ENCODE measurements at regions of chr13 and their contacts with region 1.

Region 1: GRCh38 chr13:40190641-40191100 is 475.8 kb downstream of the FOXO1 start:
- DNase-seq: peak in 8 of 10 donors; percentile 71 to 86 (median 81)
- H3K4me3 ChIP-seq: peak overlapping the region in 11 of 59 donors; percentile 4 to 49 (median 24)
- H3K27ac ChIP-seq: peak overlapping the region; percentile 76 to 99 (median 97)
- H3K27me3 ChIP-seq: no peaks in the 10 kb centered on the region
- CTCF ChIP-seq: no peak

Region 2: DNA sequence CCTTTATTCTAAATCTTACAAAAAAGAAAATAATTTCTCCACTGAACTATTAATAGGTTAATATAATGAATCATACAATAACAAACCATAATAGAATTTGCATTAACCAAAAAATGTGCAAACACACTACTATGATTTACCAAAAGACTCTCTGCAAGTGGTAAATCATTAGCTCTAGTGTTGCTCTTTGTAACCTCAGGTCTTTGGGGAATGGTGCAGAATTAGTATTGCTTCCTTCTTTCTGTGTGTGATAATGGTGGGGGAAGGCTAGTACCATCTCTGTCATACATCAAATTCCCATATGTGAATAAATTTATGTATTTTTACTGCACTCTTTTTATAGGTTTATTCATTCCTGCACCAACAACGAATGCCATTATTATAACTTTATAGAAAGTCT is 430.1 kb before region 1 on chr13:
- intact Hi-C with region 1: no loop called
- DNase-seq: no peak
- H3K4me3 ChIP-seq: no peak overlapping the region
- H3K27ac ChIP-seq: no peak overlapping the region
- H3K27me3 ChIP-seq: no peaks in the 10 kb centered on the region
- CTCF ChIP-seq: no peak

Region 3: DNA sequence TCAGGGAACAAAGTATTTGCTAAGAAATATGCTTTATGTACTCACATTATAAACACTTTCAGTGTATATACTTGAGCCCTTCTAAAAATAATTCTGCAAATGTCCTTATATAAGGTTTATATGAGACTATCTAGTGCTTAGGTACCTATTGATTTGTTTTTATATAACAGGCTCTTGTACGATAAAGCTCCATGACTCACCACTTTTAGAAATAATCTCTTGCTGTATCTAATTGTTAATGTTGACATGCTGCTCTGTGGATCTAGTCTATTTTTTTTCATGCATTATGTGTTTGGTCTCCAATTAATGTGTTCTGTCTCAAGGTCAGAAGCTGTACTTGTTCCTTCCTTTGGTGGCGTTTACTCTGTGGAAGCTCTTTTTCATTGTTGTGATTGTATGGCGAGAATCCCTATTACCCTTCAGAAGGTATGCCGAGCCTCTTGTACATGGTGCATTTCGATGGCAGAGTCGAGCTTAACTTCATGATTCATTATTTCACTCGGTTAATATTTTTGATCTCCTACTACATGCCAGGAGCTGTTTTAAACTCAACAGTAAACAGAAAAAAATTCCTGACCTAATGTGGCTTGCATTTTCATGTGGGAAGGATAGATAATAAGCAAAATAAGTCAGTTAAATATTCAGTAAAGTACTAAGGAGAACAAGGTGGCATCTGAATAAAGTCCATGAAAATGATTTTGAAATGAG is 173.6 kb before region 1 on chr13:
- intact Hi-C with region 1: no loop called
- DNase-seq: no peak
- H3K4me3 ChIP-seq: no peak overlapping the region
- H3K27ac ChIP-seq: no peak overlapping the region
- H3K27me3 ChIP-seq: peaks cover 0 to 5% (median 0%) of the 10 kb centered on the region in 45 donors
- CTCF ChIP-seq: no peak

Region 4: GRCh38 chr13:40130871-40131636 is 59.6 kb before region 1 on chr13:
- intact Hi-C with region 1: no loop called
- DNase-seq: no peak
- H3K4me3 ChIP-seq: no peak overlapping the region
- H3K27ac ChIP-seq: no peak overlapping the region
- H3K27me3 ChIP-seq: no peaks in the 10 kb centered on the region
- CTCF ChIP-seq: no peak

Region 5: DNA sequence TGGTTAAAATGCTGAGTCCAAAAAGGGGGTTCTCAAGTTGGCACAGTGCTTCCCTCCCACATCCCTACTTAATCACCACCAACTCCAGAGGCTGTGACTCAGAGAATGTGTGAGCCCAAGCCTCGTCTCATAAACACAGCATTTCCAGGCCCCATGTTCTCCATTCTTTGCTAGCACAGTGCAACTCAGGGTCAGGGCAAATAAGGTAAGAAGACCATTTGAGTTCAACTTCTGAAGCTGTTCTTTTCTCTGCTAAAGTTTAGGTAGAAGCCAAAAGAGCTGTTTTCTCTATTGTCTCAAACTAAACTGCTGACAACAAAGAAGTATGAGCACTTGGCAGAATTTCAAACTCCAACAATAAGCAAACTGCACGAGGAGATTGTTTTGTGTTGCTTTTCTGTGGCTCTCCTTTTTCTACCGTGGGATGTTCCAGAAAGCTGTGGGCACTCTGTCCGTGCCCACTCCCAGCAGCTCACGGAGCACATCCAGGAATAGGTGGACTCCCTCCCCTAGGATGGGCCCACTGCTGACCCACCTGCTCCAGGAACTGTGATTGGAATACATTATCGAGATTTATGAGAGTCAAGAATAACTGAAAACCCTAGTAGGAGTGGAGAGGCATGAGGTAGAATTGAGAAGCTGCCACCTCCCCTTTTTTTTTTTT is 40.9 kb before region 1 on chr13:
- intact Hi-C with region 1: loop called in 1 of 2 experiments (anchors 5 kb)
- DNase-seq: peak in 1 of 10 donors; percentile 15
- H3K4me3 ChIP-seq: no peak overlapping the region
- H3K27ac ChIP-seq: peak overlapping the region in 56 of 59 donors; percentile 16 to 88 (median 66)
- H3K27me3 ChIP-seq: no peaks in the 10 kb centered on the region
- CTCF ChIP-seq: no peak

Region 6: GRCh38 chr13:40271931-40272775 is 81.5 kb after region 1 on chr13:
- intact Hi-C with region 1: loop called (anchors 2 kb)
- DNase-seq: peak in 6 of 10 donors; percentile 24 to 67 (median 54)
- H3K4me3 ChIP-seq: no peak overlapping the region
- H3K27ac ChIP-seq: peak overlapping the region; percentile 14 to 89 (median 77)
- H3K27me3 ChIP-seq: no peaks in the 10 kb centered on the region
- CTCF ChIP-seq: no peak

Region 7: DNA sequence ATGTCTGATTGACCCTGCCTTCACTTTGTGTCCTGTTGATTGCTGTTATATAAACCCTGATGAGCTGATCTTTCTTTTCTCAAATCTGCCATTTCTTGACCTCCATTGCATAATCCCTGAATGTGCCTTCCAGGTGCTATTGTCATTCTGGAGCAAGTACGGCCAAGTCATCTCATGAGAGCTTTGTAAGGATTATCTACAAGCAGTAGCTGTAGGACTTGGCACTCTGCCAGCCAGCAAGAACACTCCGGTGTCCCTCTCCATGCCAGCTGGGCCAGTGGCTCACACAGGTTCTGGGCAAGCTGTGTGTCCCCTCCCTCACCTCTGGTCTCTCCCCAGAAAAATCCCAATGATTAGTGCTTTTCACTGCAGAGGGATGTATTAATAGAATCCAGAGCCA is 127.7 kb after region 1 on chr13:
- intact Hi-C with region 1: no loop called
- DNase-seq: peak in 8 of 10 donors; percentile 12 to 61 (median 52)
- H3K4me3 ChIP-seq: no peak overlapping the region
- H3K27ac ChIP-seq: no peak overlapping the region
- H3K27me3 ChIP-seq: no peaks in the 10 kb centered on the region
- CTCF ChIP-seq: no peak

Region 8: GRCh38 chr13:40352380-40352778 is 161.7 kb after region 1 on chr13:
- intact Hi-C with region 1: loop called in 1 of 2 experiments (anchors 10 kb)
- DNase-seq: peak in 7 of 10 donors; percentile 34 to 67 (median 54)
- H3K4me3 ChIP-seq: peak overlapping the region in 16 of 59 donors; percentile 4 to 43 (median 26)
- H3K27ac ChIP-seq: peak overlapping the region in 53 of 59 donors; percentile 8 to 84 (median 68)
- H3K27me3 ChIP-seq: peaks cover 0 to 3% (median 0%) of the 10 kb centered on the region in 45 donors
- CTCF ChIP-seq: no peak

Measured in dorsolateral prefrontal cortex (tissue), 120 donors.